ENCODE measurements at regions of chr20 and their contacts with region 1.

Region 1: DNA sequence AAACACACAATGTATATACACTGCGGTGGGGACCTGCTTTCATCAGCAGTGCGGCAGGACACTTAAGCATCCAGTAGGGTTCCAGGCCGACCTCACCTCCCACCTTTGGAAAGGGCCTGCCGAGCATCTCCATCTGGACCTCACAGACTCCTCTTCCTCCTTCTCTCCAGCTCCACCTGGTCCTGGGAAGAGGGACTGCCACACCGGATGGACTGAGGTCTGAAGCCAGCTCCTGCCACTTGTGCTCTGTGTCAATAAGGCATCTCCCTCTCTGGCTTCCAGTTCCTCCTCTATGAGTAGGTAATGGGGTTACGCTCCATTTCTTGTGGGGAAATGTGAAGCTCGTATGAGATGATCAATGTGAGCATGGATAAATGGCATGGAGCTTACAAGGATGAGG is 19.1 kb upstream of the NNAT start:
- DNase-seq: no peak
- H3K4me3 ChIP-seq: no peak overlapping the region
- H3K27ac ChIP-seq: no peak overlapping the region
- H3K4me1 ChIP-seq: peaks cover 7 to 15% (median 10%) of the 10 kb centered on the region in 4 experiments; a peak in 6 of 7 replicates
- H3K27me3 ChIP-seq: no peaks in the 10 kb centered on the region
- CTCF ChIP-seq: peak; percentile 41 to 58 (median 56)
- EP300 ChIP-seq: no peak
- POLR2A ChIP-seq: no peak
- RAD21 ChIP-seq: peak; percentile 47 to 64; a peak in 3 of 4 replicates

Region 2: DNA sequence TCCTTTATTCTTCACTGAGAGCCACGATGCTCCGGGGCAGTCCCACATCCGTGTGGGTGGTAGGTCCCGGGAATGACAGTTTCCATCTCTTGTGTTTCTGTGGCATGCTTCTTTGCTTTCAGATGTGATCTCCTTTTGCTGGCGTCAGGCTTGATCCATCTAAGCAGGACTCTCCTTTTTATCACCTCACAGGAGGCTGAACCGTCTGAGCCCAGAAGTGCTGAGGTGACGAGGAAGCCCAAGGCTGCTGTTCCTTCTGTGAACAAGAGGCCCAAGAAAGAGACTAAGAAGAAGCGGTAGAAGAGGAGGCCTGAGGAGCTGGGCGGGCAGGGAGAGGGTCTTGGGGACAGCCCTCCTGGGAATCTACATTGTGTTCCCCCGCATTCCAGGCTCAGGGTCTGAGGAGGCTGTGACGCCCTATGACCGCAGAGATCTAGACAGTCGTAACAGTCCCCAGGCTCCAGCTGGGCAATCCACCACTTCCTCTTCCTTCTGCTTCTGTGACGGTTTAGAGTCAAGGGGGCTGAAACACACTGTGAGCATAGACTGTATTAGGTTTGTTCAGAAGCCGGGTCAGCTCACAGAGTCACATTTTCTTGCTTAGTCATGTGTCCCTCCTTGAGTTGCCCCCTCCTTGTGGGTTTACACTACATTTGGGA is 185.7 kb before region 1 on chr20:
- CTCF ChIA-PET with region 1: no interaction called
- POLR2A ChIA-PET with region 1: no interaction called
- DNase-seq: no peak
- H3K4me3 ChIP-seq: no peak overlapping the region
- H3K27ac ChIP-seq: no peak overlapping the region
- H3K4me1 ChIP-seq: peaks cover 2 to 9% (median 7%) of the 10 kb centered on the region in 4 experiments; a peak in 5 of 7 replicates
- H3K27me3 ChIP-seq: no peaks in the 10 kb centered on the region
- CTCF ChIP-seq: no peak
- EP300 ChIP-seq: no peak
- POLR2A ChIP-seq: no peak
- RAD21 ChIP-seq: no peak

Region 3: GRCh38 chr20:37490663-37491350 is 11.1 kb before region 1 on chr20:
- CTCF ChIA-PET with region 1: interaction called, 26 read pairs
- POLR2A ChIA-PET with region 1: interaction called, 106 read pairs
- DNase-seq: no peak
- H3K4me3 ChIP-seq: no peak overlapping the region
- H3K27ac ChIP-seq: no peak overlapping the region
- H3K4me1 ChIP-seq: peaks cover 0 to 4% (median 0%) of the 10 kb centered on the region in 4 experiments; a peak in 2 of 7 replicates
- H3K27me3 ChIP-seq: no peaks in the 10 kb centered on the region; a peak in 2 of 7 replicates
- CTCF ChIP-seq: no peak
- EP300 ChIP-seq: no peak
- POLR2A ChIP-seq: no peak
- RAD21 ChIP-seq: no peak

Region 4: DNA sequence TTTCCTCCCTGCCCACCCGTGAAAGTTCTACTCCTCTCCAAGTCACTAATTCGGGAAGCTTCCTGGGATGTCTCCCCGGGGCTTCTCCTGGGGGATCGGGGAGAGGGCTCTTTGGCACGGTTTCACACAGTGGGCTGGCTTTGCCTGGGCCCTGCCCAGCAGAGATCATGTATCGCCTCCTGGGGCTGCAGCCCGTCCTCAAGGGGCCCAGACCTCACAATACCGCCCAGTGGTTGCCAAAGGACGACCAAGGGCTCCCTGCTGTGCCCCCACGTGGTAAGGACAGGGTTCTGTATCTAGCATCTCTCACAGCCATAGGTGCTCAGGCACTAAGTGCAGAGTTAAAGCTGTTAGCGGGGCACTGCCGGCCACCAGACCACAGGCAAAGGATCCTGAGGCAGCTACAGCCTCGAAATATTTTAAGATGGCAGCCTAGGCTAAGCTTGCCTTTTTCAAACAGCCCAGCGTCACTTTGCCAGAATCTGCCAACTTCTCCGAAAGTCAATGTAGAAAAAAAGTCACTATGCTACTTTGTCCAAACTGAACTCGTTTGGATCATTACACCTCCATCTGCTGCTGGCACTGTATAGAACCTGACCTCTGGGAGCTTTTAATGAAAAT is 17.7 kb after region 1 on chr20:
- CTCF ChIA-PET with region 1: interaction called, 9 read pairs
- POLR2A ChIA-PET with region 1: interaction called, 116 read pairs
- DNase-seq: peak in 1 of 2 experiments; percentile 67
- H3K4me3 ChIP-seq: peak overlapping the region; percentile 45 to 66 (median 48); a peak in 7 of 8 replicates
- H3K27ac ChIP-seq: no peak overlapping the region
- H3K4me1 ChIP-seq: peaks cover 9 to 39% (median 30%) of the 10 kb centered on the region in 4 experiments
- H3K27me3 ChIP-seq: no peaks in the 10 kb centered on the region; a peak in 1 of 7 replicates
- CTCF ChIP-seq: no peak
- EP300 ChIP-seq: no peak
- POLR2A ChIP-seq: no peak
- RAD21 ChIP-seq: peak in 1 of 2 experiments; percentile 8; a peak in 1 of 4 replicates

Region 5: GRCh38 chr20:37534401-37535157 is 32.6 kb after region 1 on chr20:
- CTCF ChIA-PET with region 1: interaction called, 10 read pairs
- POLR2A ChIA-PET with region 1: interaction called, 7 read pairs
- DNase-seq: peak in 1 of 2 experiments; percentile 70
- H3K4me3 ChIP-seq: no peak overlapping the region
- H3K27ac ChIP-seq: no peak overlapping the region
- H3K4me1 ChIP-seq: no peaks in the 10 kb centered on the region
- H3K27me3 ChIP-seq: no peaks in the 10 kb centered on the region
- CTCF ChIP-seq: peak in 2 of 3 experiments; percentile 78 to 90; a peak in 3 of 4 replicates
- EP300 ChIP-seq: no peak
- POLR2A ChIP-seq: no peak
- RAD21 ChIP-seq: peak; percentile 97 to 98

Measured in H1 (cell line).